ENCODE measurements at regions of chr17 and their contacts with region 1.

Region 1: GRCh38 chr17:57084802-57085447 is at the start of gene AKAP1:
- DNase-seq: peak; percentile 97 to 99 (median 98)
- ATAC-seq: peak; percentile 94
- H3K4me3 ChIP-seq: peak within 1 kb of the TSS; percentile 61
- H3K27ac ChIP-seq: peak within 1 kb of the TSS; percentile 83
- H3K4me1 ChIP-seq: peaks cover 24 to 36% of the 10 kb centered on the region in 2 experiments; a peak in 4 of 5 replicates
- H3K27me3 ChIP-seq: no peaks in the 10 kb centered on the region
- CTCF ChIP-seq: peak in 2 of 3 experiments; percentile 56 to 60; a peak in 4 of 6 replicates
- EP300 ChIP-seq: no peak
- POLR2A ChIP-seq: peak; percentile 95
- RAD21 ChIP-seq: peak; percentile 27 to 32
- polyA plus RNA-seq, gene AKAP1: 12.9 to 13.2 TPM

Region 2: GRCh38 chr17:57097832-57098421 is 13.0 kb after region 1 on chr17:
- CTCF ChIA-PET with region 1: no interaction called
- POLR2A ChIA-PET with region 1: interaction called, 10 read pairs
- in situ Hi-C with region 1: no loop called
- intact Hi-C with region 1: no loop called
- DNase-seq: no peak
- ATAC-seq: peak; percentile 43; the same call in 2 of the 3 replicates
- H3K4me3 ChIP-seq: no peak overlapping the region
- H3K27ac ChIP-seq: no peak overlapping the region
- H3K4me1 ChIP-seq: peaks cover 12 to 17% of the 10 kb centered on the region in 2 experiments; a peak in 4 of 5 replicates
- H3K27me3 ChIP-seq: no peaks in the 10 kb centered on the region
- CTCF ChIP-seq: no peak
- EP300 ChIP-seq: no peak
- POLR2A ChIP-seq: no peak
- RAD21 ChIP-seq: no peak

Measured in K562 (cell line).